Activated CD4-positive, alpha-beta memory T cell treated with anti-CD3 and anti-CD28 coated beads, Interleukin-2, amount 10 ng/mL, durations not matched to agents 7 days and 5 days (primary cell): ENCODE measurements at regions of chr3 and their contacts with region 1.

Region 1: DNA sequence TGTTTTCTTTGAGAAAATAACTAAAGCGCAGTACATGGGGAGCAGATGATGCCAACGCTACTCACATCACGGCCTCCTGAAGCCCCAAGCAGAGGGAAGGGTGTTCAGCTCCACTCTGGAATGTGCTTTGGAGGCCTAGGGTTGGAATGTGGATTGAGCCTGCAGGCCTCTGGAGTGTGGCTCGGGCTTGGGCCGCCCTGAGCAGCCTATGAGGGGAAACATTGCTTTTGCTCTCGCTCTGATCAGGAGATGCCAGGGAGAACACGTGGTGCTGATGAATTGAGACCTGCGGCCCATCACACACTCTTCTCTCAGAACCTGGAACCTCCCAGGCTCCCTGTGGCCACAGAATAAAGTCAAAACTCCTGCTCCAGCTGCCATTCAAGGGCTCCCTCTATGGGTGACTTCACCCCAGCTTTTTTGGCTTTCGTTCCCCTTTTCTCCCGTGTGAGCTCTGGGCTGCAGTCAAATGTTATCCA is 23.3 kb downstream of the CCDC13 start:
- DNase-seq: no peak
- H3K4me3 Mint-ChIP-seq: no peak overlapping the region
- H3K27ac Mint-ChIP-seq: no peak overlapping the region
- H3K4me1 Mint-ChIP-seq: peaks cover 48% of the 10 kb centered on the region
- H3K27me3 Mint-ChIP-seq: no peaks in the 10 kb centered on the region

Region 2: GRCh38 chr3:42581709-42582473 is 167.9 kb before region 1 on chr3 and contains the start of gene SEC22C:
- CTCF ChIA-PET with region 1: interaction called, 16 read pairs
- POLR2A ChIA-PET with region 1: no interaction called
- DNase-seq: peak; percentile 96
- H3K4me3 Mint-ChIP-seq: peak within 1 kb of the TSS; percentile 86
- H3K27ac Mint-ChIP-seq: peak within 1 kb of the TSS; percentile 87
- H3K4me1 Mint-ChIP-seq: peaks cover 63% of the 10 kb centered on the region
- H3K27me3 Mint-ChIP-seq: no peaks in the 10 kb centered on the region
- total RNA-seq, gene SEC22C: 58.8 to 62.0 TPM

Region 3: GRCh38 chr3:42590989-42591756 is 158.6 kb before region 1 on chr3:
- CTCF ChIA-PET with region 1: interaction called, 10 read pairs
- POLR2A ChIA-PET with region 1: interaction called, 4 read pairs
- DNase-seq: peak; percentile 33
- H3K4me3 Mint-ChIP-seq: peak overlapping the region; percentile 88
- H3K27ac Mint-ChIP-seq: peak overlapping the region; percentile 92
- H3K4me1 Mint-ChIP-seq: peaks cover 58% of the 10 kb centered on the region
- H3K27me3 Mint-ChIP-seq: no peaks in the 10 kb centered on the region

Region 4: DNA sequence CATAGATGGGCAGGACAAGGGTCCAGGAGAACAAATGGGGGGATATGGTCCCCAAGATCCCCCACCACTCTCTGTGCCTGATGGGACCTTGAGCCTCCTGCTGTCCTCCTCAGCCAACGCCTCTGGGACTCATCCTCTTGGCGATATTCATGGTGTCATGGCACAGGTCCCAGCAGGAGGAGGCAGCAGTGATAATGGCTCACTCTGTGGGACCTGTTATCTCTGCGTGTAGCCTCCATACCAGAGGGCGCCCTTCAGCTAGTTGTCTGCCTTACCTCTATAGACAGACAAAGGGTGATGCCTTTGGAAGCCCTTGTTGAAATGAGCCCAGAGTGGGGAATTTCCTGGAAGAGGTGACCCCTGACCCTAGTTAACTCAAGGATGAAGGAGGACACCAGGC is 88.9 kb before region 1 on chr3:
- CTCF ChIA-PET with region 1: interaction called, 24 read pairs
- POLR2A ChIA-PET with region 1: no interaction called
- DNase-seq: peak; percentile 36
- H3K4me3 Mint-ChIP-seq: no peak overlapping the region
- H3K27ac Mint-ChIP-seq: no peak overlapping the region
- H3K4me1 Mint-ChIP-seq: no peaks in the 10 kb centered on the region
- H3K27me3 Mint-ChIP-seq: no peaks in the 10 kb centered on the region

Region 5: GRCh38 chr3:42680271-42680670 is 69.5 kb before region 1 on chr3:
- CTCF ChIA-PET with region 1: no interaction called
- POLR2A ChIA-PET with region 1: no interaction called
- DNase-seq: no peak
- H3K4me3 Mint-ChIP-seq: no peak overlapping the region
- H3K27ac Mint-ChIP-seq: no peak overlapping the region
- H3K4me1 Mint-ChIP-seq: peaks cover 11% of the 10 kb centered on the region
- H3K27me3 Mint-ChIP-seq: peaks cover 7% of the 10 kb centered on the region

Region 6: GRCh38 chr3:42701142-42702065 is 48.4 kb before region 1 on chr3:
- CTCF ChIA-PET with region 1: no interaction called
- POLR2A ChIA-PET with region 1: no interaction called
- DNase-seq: peak; percentile 78
- H3K4me3 Mint-ChIP-seq: no peak overlapping the region
- H3K27ac Mint-ChIP-seq: no peak overlapping the region
- H3K4me1 Mint-ChIP-seq: peaks cover 22% of the 10 kb centered on the region
- H3K27me3 Mint-ChIP-seq: peaks cover 4% of the 10 kb centered on the region

Region 7: DNA sequence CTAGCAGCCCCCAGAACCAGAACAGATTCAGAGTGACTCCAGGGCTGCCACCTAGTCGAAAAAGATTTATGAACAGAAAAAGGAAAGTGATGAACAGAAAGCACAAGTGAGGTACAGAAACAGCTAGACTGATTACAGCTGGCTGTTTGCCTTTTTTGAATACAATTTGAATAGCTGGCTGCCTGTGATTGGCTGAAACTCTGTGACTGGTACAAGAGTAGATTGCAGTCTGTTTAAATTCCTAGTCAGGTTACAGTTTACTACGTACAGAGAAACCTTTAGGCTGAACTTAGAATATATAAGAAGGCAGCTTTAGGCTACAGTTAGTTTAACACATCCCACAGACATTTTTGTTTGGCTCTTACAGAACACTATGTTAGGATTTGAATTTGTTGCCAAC is 13.2 kb after region 1 on chr3:
- CTCF ChIA-PET with region 1: interaction called, 57 read pairs
- POLR2A ChIA-PET with region 1: interaction called, 3 read pairs
- DNase-seq: no peak
- H3K4me3 Mint-ChIP-seq: no peak overlapping the region
- H3K27ac Mint-ChIP-seq: no peak overlapping the region
- H3K4me1 Mint-ChIP-seq: no peaks in the 10 kb centered on the region
- H3K27me3 Mint-ChIP-seq: peaks cover 12% of the 10 kb centered on the region